PC-3 (cell line): ENCODE measurements at regions of chr2 and their contacts with region 1.

Region 1: GRCh38 chr2:37156857-37157714 is at the start of gene EIF2AK2:
- DNase-seq: peak; percentile 88
- ATAC-seq: peak; percentile 90
- H3K4me3 ChIP-seq: peak within 1 kb of the TSS; percentile 84
- H3K27ac ChIP-seq: peak within 1 kb of the TSS; percentile 66
- H3K4me1 ChIP-seq: peaks cover 23% of the 10 kb centered on the region
- H3K27me3 ChIP-seq: no peaks in the 10 kb centered on the region
- CTCF ChIP-seq: no peak
- total RNA-seq, gene EIF2AK2: 29.3 and 30.9 TPM in 2 replicates

Region 2: GRCh38 chr2:37231241-37232130 is 74.4 kb after region 1 on chr2 and contains the starts of genes CEBPZ and NDUFAF7:
- CTCF ChIA-PET with region 1: no interaction called
- POLR2A ChIA-PET with region 1: no interaction called
- intact Hi-C with region 1: loop called (anchors 2 kb)
- DNase-seq: peak; percentile 94
- ATAC-seq: peak; percentile 96
- H3K4me3 ChIP-seq: peak within 1 kb of the TSS; percentile 91
- H3K27ac ChIP-seq: peak within 1 kb of the TSS; percentile 66
- H3K4me1 ChIP-seq: peaks cover 23% of the 10 kb centered on the region
- H3K27me3 ChIP-seq: no peaks in the 10 kb centered on the region
- CTCF ChIP-seq: no peak
- total RNA-seq, gene CEBPZ: 39.8 and 40.7 TPM in 2 replicates
- total RNA-seq, gene NDUFAF7: 12.3 and 13.2 TPM in 2 replicates

Region 3: DNA sequence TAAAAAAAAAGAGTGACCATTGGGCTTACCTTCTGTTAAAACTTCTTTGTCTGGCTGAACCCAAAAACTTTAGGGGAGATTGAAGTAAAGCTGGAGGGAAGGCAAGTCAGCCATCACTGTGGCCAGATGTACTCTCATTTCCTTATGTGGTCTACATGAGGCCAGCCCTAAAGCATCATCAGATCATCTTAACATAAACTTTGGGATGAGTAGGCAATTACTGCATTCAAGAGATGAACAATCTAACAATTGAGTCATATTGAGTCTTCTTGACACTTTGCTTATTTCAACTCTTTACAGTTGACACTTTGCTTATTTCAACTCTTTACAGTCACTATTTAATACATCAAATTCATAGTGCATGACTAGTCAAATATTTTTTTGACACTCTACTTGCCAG is 342.9 kb after region 1 on chr2:
- CTCF ChIA-PET with region 1: no interaction called
- POLR2A ChIA-PET with region 1: no interaction called
- intact Hi-C with region 1: no loop called
- DNase-seq: no peak
- ATAC-seq: no peak
- H3K4me3 ChIP-seq: no peak overlapping the region
- H3K27ac ChIP-seq: no peak overlapping the region
- H3K4me1 ChIP-seq: no peaks in the 10 kb centered on the region
- H3K27me3 ChIP-seq: no peaks in the 10 kb centered on the region
- CTCF ChIP-seq: no peak